Endothelial cell of umbilical vein (primary cell): ENCODE measurements at regions of chr2 and their contacts with region 1.

Region 1: DNA sequence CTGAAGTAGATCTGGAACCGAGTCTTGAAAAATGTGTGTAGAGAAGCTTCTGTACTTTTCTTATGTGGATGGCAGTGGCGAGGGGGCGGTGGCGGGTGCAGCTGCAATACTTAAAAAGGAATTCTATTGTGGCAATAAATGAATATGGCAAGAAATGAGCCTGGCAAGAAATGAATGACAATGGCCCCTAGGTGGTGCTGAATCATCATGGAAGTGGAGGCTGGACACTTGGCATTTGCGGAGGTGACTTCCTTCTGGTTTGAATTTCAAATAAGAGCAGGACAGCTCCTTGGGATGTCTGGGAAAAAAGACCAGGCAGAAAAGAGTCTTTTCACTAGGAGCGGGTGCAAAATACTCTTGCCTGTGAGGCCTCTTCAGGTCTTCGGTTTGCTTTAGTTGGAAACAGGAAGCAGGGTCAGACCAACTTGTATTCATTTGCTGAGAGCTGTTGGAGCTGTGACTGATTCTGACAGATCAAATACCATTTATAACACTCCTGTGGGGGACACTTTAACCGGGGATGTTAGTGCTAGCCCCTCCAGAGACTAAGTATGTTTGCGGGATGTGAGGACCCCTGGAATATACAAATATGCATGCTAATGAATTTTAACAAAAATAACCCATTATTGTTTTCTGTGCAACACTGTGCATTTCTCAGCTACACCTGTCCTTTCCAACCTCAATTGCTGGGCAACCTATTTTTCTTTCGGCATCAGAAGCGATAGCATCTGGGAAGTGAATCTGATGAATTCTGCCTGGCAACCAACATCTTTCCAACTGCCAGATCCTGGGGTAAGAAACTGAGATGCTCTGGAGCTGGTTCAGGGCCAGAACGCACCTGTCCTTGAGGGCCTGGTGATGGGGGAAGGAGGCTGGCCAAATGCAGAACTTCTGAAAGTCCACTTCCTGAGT is 35.4 kb downstream of the FASTKD2 start:
- DNase-seq: peak; percentile 82
- H3K4me3 ChIP-seq: no peak overlapping the region
- H3K27ac ChIP-seq: no peak overlapping the region
- H3K4me1 ChIP-seq: peaks cover 14% of the 10 kb centered on the region
- H3K27me3 ChIP-seq: no peaks in the 10 kb centered on the region
- CTCF ChIP-seq: peak; percentile 55 to 68
- POLR2A ChIP-seq: no peak

Region 2: GRCh38 chr2:206765242-206766056 is 35.3 kb before region 1 on chr2 and contains the starts of genes FASTKD2 and MDH1B:
- CTCF ChIA-PET with region 1: interaction called, 3 read pairs
- POLR2A ChIA-PET with region 1: no interaction called
- dilution Hi-C with region 1: no loop called
- intact Hi-C with region 1: loop called (anchors 2 kb)
- DNase-seq: peak; percentile 99
- H3K4me3 ChIP-seq: peak within 1 kb of the TSS; percentile 76 to 96 (median 80)
- H3K27ac ChIP-seq: peak within 1 kb of the TSS; percentile 89
- H3K4me1 ChIP-seq: peaks cover 8% of the 10 kb centered on the region
- H3K27me3 ChIP-seq: peaks cover 5 to 20% of the 10 kb centered on the region in 2 experiments
- CTCF ChIP-seq: no peak
- POLR2A ChIP-seq: peak; percentile 90
- total RNA-seq, gene FASTKD2: 22.6 and 24.1 TPM in 2 replicates
- total RNA-seq, gene MDH1B: 0.51 TPM in 1 of 2 replicates, not detected in the other

Region 3: DNA sequence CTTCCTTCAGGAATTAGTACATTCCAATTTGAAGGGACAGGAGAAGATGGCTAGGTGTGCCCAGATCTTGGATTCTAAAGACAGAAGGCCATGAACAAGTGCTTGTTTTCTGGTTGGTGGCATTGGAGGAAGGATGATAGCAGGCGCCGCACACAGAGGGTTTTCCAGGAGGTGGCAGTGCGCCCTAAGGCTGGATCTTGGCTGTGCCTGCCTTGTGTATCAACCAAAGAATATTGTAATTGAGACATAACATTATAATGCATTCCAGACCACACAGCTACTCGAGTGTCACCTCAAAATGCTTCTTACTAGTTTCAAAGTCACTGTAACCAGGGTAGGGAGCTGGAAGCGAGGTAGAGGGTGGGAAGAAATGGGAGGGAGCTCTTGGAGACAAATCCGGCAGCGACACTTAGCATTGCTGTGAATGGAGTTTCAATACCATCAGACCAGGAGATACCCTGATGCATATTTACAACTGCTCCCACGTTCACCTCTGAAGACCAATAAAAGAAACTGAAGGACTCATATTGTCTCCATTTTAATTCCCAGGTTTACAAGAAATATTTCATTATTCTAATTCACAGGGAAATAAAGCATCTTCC is 181.1 kb after region 1 on chr2:
- CTCF ChIA-PET with region 1: interaction called, 5 read pairs
- POLR2A ChIA-PET with region 1: no interaction called
- dilution Hi-C with region 1: no loop called
- intact Hi-C with region 1: loop called (anchors 1 kb)
- DNase-seq: peak; percentile 79
- H3K4me3 ChIP-seq: no peak overlapping the region
- H3K27ac ChIP-seq: no peak overlapping the region
- H3K4me1 ChIP-seq: no peaks in the 10 kb centered on the region
- H3K27me3 ChIP-seq: peaks cover 0 to 5% of the 10 kb centered on the region in 2 experiments
- CTCF ChIP-seq: peak; percentile 83 to 88
- POLR2A ChIP-seq: no peak

Region 4: DNA sequence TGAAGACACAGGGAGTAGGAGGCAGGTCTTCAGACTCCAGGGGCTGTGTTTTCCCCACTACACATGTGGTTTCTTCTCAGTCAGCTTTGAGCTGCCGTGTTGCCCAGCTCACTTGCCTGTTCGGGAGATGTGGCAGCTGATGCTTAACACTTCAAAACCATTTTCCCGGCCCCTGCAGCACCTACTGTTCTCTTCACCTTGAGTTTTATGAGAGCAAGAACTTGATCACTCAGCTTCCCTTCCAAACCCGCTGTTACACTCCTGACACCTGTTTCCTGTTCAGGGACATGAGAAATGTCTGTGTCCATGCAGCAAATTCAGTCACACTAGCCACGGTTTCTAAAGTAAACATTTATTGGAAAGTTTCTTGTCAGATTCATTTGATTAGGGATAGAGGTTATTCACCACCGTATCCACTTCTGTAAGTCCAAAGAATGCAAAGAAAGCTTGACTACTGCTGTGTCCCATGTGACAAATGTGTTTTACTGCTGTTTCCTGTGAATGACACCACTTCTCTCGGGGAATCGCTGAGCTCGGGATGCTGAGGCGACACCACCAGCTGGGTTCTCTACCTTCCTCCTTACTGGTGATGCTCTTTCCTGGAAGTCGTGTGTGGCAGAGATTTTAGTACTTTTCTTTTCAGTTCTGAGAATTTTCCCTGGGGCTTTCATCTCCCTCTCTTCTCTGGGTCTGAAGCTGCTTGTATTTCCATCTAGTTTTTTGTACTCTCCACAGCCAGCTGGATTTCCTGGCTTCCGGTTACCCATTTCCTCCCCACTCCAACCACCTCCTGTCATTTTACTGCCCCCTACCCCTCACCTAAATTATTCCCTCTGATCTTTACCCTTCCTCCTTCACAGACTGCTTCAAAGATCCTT is 273.3 kb after region 1 on chr2:
- CTCF ChIA-PET with region 1: interaction called, 3 read pairs
- POLR2A ChIA-PET with region 1: no interaction called
- dilution Hi-C with region 1: no loop called
- intact Hi-C with region 1: loop called (anchors 1 kb)
- DNase-seq: peak; percentile 70
- H3K4me3 ChIP-seq: peak overlapping the region in 2 of 3 experiments; percentile 2 to 12
- H3K27ac ChIP-seq: peak overlapping the region; percentile 22
- H3K4me1 ChIP-seq: peaks cover 23% of the 10 kb centered on the region
- H3K27me3 ChIP-seq: no peaks in the 10 kb centered on the region
- CTCF ChIP-seq: no peak
- POLR2A ChIP-seq: peak; percentile 63

Region 5: DNA sequence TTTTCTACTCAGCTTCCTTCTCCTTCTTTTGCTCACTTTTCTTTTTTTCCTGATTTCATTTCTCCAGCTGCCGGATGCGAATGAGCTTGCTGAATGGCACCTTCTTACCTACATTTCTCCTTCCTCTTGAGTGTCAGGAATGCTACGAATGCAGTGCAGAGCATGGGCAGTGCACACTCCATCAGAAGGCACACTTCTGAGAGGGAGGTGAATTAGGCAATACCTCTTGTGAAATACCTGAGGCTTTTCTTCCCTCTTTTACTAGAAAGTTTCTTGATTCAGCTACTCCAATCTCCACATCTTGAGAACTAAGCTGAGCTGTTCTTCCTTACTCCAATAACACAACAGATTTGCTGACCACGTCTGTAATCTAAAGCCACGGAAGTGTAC is 1173.4 kb after region 1 on chr2:
- CTCF ChIA-PET with region 1: no interaction called
- POLR2A ChIA-PET with region 1: no interaction called
- dilution Hi-C with region 1: no loop called
- intact Hi-C with region 1: loop called (anchors 5 kb)
- DNase-seq: no peak
- H3K4me3 ChIP-seq: no peak overlapping the region
- H3K27ac ChIP-seq: no peak overlapping the region
- H3K4me1 ChIP-seq: no peaks in the 10 kb centered on the region
- H3K27me3 ChIP-seq: no peaks in the 10 kb centered on the region
- CTCF ChIP-seq: no peak
- POLR2A ChIP-seq: no peak